ENCODE measurements at regions of chr2 and their contacts with region 1.

Region 1: DNA sequence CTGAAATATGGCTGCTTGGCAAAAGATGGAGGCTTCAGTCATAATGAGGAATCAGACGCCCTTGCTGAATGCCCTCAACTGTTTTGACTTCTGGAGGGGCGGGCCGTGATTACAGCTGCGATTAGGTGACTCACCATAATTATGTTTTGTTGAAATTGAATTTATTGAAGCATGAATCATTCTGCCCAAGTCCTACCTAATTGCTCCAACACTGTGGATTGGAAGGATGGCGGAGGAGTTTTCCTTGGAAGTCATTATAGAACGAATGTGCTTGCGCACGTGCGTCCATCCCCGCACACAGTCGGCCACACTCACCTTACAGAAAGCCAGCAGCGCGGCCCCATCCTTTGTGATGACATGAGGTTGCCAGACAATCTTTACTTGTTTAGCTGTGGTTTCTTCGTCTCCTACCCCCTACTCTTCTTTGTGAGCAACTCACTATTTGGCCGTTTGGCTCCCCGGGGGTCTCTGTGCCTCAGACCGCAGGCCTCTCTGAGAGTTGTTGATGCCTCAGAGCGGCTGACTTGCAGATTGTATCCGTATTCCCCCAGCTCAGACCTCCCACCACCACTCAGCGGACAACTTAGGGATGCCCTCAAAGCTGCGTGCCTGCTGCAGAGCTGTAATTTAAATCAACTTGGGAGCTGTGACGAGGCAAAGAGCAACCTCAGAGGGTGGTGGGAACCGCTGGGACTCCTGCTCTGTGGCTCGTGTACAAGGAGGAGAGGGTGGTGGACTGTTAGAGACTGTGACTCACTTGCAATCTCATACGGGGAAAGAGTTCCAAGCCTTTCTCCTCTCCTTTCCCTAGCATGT is 513.4 kb downstream of the TNS1 start:
- DNase-seq: no peak
- H3K4me3 Mint-ChIP-seq: no peak overlapping the region
- H3K27ac Mint-ChIP-seq: no peak overlapping the region
- H3K4me1 Mint-ChIP-seq: no peaks in the 10 kb centered on the region
- H3K27me3 Mint-ChIP-seq: peaks cover 5% of the 10 kb centered on the region

Region 2: GRCh38 chr2:217521820-217522219 is 32.5 kb after region 1 on chr2:
- intact Hi-C with region 1: loop called (anchors 1 kb)
- DNase-seq: no peak
- H3K4me3 Mint-ChIP-seq: no peak overlapping the region
- H3K27ac Mint-ChIP-seq: no peak overlapping the region
- H3K4me1 Mint-ChIP-seq: no peaks in the 10 kb centered on the region
- H3K27me3 Mint-ChIP-seq: peaks cover 2% of the 10 kb centered on the region